CD8-positive, alpha-beta T cell (primary cell): ENCODE measurements at regions of chr9 and their contacts with region 1.

Region 1: GRCh38 chr9:126398403-126399058 is 71.9 kb downstream of the MVB12B start:
- DNase-seq: peak; percentile 57 to 88 (median 77)
- ATAC-seq: no peak
- H3K4me3 ChIP-seq: peak overlapping the region in 1 of 2 experiments; percentile 29
- H3K4me3 Mint-ChIP-seq: peak overlapping the region; percentile 69
- H3K27ac ChIP-seq: peak overlapping the region; percentile 38 to 64
- H3K27ac Mint-ChIP-seq: peak overlapping the region; percentile 86
- H3K4me1 ChIP-seq: peaks cover 44% of the 10 kb centered on the region
- H3K4me1 Mint-ChIP-seq: peaks cover 54% of the 10 kb centered on the region
- H3K27me3 ChIP-seq: no peaks in the 10 kb centered on the region
- H3K27me3 Mint-ChIP-seq: no peaks in the 10 kb centered on the region
- CTCF ChIP-seq: peak; percentile 99

Region 2: DNA sequence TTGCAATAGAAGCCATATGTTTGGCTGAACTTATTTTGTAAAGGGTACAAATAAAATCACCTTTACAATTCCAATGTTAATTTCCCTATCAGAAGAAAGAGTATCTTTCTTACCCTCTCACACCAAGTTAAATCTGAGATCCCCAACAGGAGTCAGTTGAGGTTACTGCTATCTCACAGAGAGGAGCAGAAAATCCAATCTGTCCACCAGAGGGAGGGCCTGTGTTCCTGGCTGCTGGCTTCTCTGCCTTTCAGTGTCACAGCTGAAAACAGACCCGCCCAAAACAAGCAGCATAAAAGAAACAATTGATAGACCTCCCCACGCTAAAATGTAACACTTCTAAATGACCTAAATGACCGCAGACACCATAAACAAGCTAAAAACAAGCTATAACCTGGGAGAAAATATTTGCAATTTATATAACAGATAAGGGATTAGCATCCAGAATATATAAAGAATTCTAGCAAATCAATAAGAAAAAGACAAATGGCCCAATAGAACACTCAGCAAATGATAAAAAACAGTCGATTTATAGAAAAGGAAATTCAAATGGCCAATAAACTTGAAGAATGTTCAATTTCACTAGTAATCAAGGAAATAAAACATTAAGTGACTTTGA is 96.4 kb before region 1 on chr9:
- CTCF ChIA-PET with region 1: interaction called, 89 read pairs
- POLR2A ChIA-PET with region 1: interaction called, 3 read pairs
- intact Hi-C with region 1: loop called (anchors 1 kb)
- DNase-seq: peak; percentile 22 to 79 (median 59)
- ATAC-seq: peak; percentile 87
- H3K4me3 ChIP-seq: no peak overlapping the region
- H3K4me3 Mint-ChIP-seq: no peak overlapping the region
- H3K27ac ChIP-seq: no peak overlapping the region
- H3K27ac Mint-ChIP-seq: no peak overlapping the region
- H3K4me1 ChIP-seq: no peaks in the 10 kb centered on the region
- H3K4me1 Mint-ChIP-seq: peaks cover 3% of the 10 kb centered on the region
- H3K27me3 ChIP-seq: no peaks in the 10 kb centered on the region
- H3K27me3 Mint-ChIP-seq: peaks cover 4% of the 10 kb centered on the region
- CTCF ChIP-seq: peak; percentile 71

Region 3: GRCh38 chr9:126326228-126327005 is 72.1 kb before region 1 on chr9 and contains the start of gene MVB12B:
- CTCF ChIA-PET with region 1: interaction called, 182 read pairs
- POLR2A ChIA-PET with region 1: interaction called, 7 read pairs
- intact Hi-C with region 1: loop called (anchors 2 kb)
- DNase-seq: peak; percentile 29 to 82 (median 53)
- ATAC-seq: peak; percentile 76
- H3K4me3 ChIP-seq: peak within 1 kb of the TSS; percentile 56 to 61
- H3K4me3 Mint-ChIP-seq: peak within 1 kb of the TSS; percentile 88
- H3K27ac ChIP-seq: peak within 1 kb of the TSS; percentile 46 to 74
- H3K27ac Mint-ChIP-seq: peak within 1 kb of the TSS; percentile 97
- H3K4me1 ChIP-seq: peaks cover 46% of the 10 kb centered on the region
- H3K4me1 Mint-ChIP-seq: peaks cover 46% of the 10 kb centered on the region
- H3K27me3 ChIP-seq: no peaks in the 10 kb centered on the region
- H3K27me3 Mint-ChIP-seq: no peaks in the 10 kb centered on the region
- CTCF ChIP-seq: no peak
- total RNA-seq, gene MVB12B: 25.7 to 26.9 TPM

Region 4: GRCh38 chr9:126411225-126411947 is 12.9 kb after region 1 on chr9:
- CTCF ChIA-PET with region 1: interaction called, 12 read pairs
- POLR2A ChIA-PET with region 1: interaction called, 4 read pairs
- intact Hi-C with region 1: loop called (anchors 1 to 2 kb)
- DNase-seq: peak in 4 of 9 experiments; percentile 23 to 84 (median 70)
- ATAC-seq: peak; percentile 92
- H3K4me3 ChIP-seq: peak overlapping the region; percentile 25 to 40
- H3K4me3 Mint-ChIP-seq: peak overlapping the region; percentile 81
- H3K27ac ChIP-seq: peak overlapping the region; percentile 38 to 73
- H3K27ac Mint-ChIP-seq: peak overlapping the region; percentile 93
- H3K4me1 ChIP-seq: peaks cover 42% of the 10 kb centered on the region
- H3K4me1 Mint-ChIP-seq: peaks cover 43% of the 10 kb centered on the region
- H3K27me3 ChIP-seq: no peaks in the 10 kb centered on the region
- H3K27me3 Mint-ChIP-seq: no peaks in the 10 kb centered on the region
- CTCF ChIP-seq: no peak

Region 5: GRCh38 chr9:126428534-126429175 is 30.1 kb after region 1 on chr9:
- CTCF ChIA-PET with region 1: interaction called, 19 read pairs
- POLR2A ChIA-PET with region 1: no interaction called
- intact Hi-C with region 1: no loop called
- DNase-seq: no peak
- ATAC-seq: no peak
- H3K4me3 ChIP-seq: no peak overlapping the region
- H3K4me3 Mint-ChIP-seq: no peak overlapping the region
- H3K27ac ChIP-seq: no peak overlapping the region
- H3K27ac Mint-ChIP-seq: no peak overlapping the region
- H3K4me1 ChIP-seq: peaks cover 6% of the 10 kb centered on the region
- H3K4me1 Mint-ChIP-seq: peaks cover 20% of the 10 kb centered on the region
- H3K27me3 ChIP-seq: no peaks in the 10 kb centered on the region
- H3K27me3 Mint-ChIP-seq: no peaks in the 10 kb centered on the region
- CTCF ChIP-seq: no peak

Region 6: DNA sequence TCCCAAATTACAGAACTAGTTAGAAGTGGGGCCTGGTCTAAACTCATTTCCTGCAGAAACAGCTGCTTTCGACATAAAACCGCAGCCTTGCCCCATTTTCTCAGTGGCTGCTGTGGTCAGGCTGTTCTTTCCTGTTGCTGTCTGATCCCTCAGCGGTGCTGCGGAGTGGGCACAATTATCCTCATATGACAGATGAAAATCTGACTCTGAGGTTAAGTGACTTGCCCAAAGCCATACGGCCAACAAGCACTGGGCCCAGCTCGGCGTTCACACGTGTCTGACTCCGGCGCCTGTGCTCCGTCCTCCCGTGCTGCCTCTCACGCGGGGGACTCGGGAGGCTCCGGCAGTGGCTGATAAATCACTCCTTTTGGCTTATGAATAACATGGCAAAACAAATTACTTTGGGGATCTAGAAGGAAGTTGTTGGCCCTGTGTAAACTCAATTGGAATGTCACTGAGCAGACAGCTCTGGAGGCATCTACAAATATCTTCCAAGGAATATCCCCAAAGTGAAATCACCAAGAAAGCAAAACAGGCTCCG is 72.6 kb after region 1 on chr9:
- CTCF ChIA-PET with region 1: interaction called, 57 read pairs
- POLR2A ChIA-PET with region 1: interaction called, 4 read pairs
- intact Hi-C with region 1: loop called (anchors 1 kb)
- DNase-seq: peak; percentile 56 to 93 (median 78)
- ATAC-seq: peak; percentile 73
- H3K4me3 ChIP-seq: peak overlapping the region; percentile 18 to 40
- H3K4me3 Mint-ChIP-seq: peak overlapping the region; percentile 71
- H3K27ac ChIP-seq: peak overlapping the region; percentile 46 to 63
- H3K27ac Mint-ChIP-seq: peak overlapping the region; percentile 94
- H3K4me1 ChIP-seq: peaks cover 59% of the 10 kb centered on the region
- H3K4me1 Mint-ChIP-seq: peaks cover 94% of the 10 kb centered on the region
- H3K27me3 ChIP-seq: no peaks in the 10 kb centered on the region
- H3K27me3 Mint-ChIP-seq: no peaks in the 10 kb centered on the region
- CTCF ChIP-seq: no peak

Region 7: GRCh38 chr9:126500684-126501382 is 102.3 kb after region 1 on chr9:
- CTCF ChIA-PET with region 1: interaction called, 20 read pairs
- POLR2A ChIA-PET with region 1: no interaction called
- intact Hi-C with region 1: no loop called
- DNase-seq: peak; percentile 42 to 81 (median 66)
- ATAC-seq: peak; percentile 67
- H3K4me3 ChIP-seq: no peak overlapping the region
- H3K4me3 Mint-ChIP-seq: peak overlapping the region; percentile 55
- H3K27ac ChIP-seq: no peak overlapping the region
- H3K27ac Mint-ChIP-seq: no peak overlapping the region
- H3K4me1 ChIP-seq: peaks cover 13% of the 10 kb centered on the region
- H3K4me1 Mint-ChIP-seq: peaks cover 20% of the 10 kb centered on the region
- H3K27me3 ChIP-seq: peaks cover 0 to 2% of the 10 kb centered on the region in 2 experiments
- H3K27me3 Mint-ChIP-seq: peaks cover 2% of the 10 kb centered on the region
- CTCF ChIP-seq: peak; percentile 94